ENCODE measurements at regions of chr9 and their contacts with region 1.

Region 1: GRCh38 chr9:91150998-91151717 is 210.6 kb downstream of the AUH start:
- DNase-seq: peak; percentile 64
- H3K4me3 Mint-ChIP-seq: peak overlapping the region; percentile 52
- H3K27ac Mint-ChIP-seq: peak overlapping the region; percentile 96
- H3K4me1 Mint-ChIP-seq: peaks cover 90% of the 10 kb centered on the region
- H3K27me3 Mint-ChIP-seq: no peaks in the 10 kb centered on the region

Region 2: GRCh38 chr9:90964101-90965020 is 186.8 kb before region 1 on chr9:
- intact Hi-C with region 1: loop called (anchors 2 kb)
- DNase-seq: peak; percentile 17
- H3K4me3 Mint-ChIP-seq: peak overlapping the region; percentile 69
- H3K27ac Mint-ChIP-seq: peak overlapping the region; percentile 81
- H3K4me1 Mint-ChIP-seq: peaks cover 65% of the 10 kb centered on the region
- H3K27me3 Mint-ChIP-seq: no peaks in the 10 kb centered on the region

Region 3: GRCh38 chr9:90974643-90975245 is 176.4 kb before region 1 on chr9:
- intact Hi-C with region 1: no loop called
- DNase-seq: no peak
- H3K4me3 Mint-ChIP-seq: no peak overlapping the region
- H3K27ac Mint-ChIP-seq: no peak overlapping the region
- H3K4me1 Mint-ChIP-seq: peaks cover 31% of the 10 kb centered on the region
- H3K27me3 Mint-ChIP-seq: no peaks in the 10 kb centered on the region

Region 4: GRCh38 chr9:91047993-91048607 is 103.1 kb before region 1 on chr9:
- intact Hi-C with region 1: loop called (anchors 1 kb)
- DNase-seq: peak; percentile 56
- H3K4me3 Mint-ChIP-seq: peak overlapping the region; percentile 28
- H3K27ac Mint-ChIP-seq: peak overlapping the region; percentile 90
- H3K4me1 Mint-ChIP-seq: peaks cover 73% of the 10 kb centered on the region
- H3K27me3 Mint-ChIP-seq: no peaks in the 10 kb centered on the region

Region 5: DNA sequence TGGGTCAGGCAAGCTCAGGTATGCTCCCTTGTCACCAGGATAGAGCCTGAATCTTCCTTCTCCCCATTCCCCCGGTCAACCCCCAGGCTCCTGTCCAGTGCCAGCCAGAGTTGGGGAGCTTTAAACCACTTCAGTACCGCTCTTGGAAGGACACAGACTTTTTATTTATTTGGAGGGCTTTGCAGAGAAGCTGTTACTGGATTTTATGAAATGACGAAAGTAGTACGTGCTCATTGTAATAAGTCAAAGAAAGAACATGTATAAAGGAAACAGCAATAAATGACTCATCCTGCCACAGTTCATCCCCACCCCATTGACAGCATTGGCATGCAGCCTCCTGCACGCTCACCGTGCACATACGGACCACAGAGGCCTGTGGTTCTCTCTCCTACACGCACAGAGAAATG is 19.7 kb before region 1 on chr9:
- intact Hi-C with region 1: loop called (anchors 1 kb)
- DNase-seq: peak; percentile 81
- H3K4me3 Mint-ChIP-seq: peak overlapping the region; percentile 49
- H3K27ac Mint-ChIP-seq: peak overlapping the region; percentile 98
- H3K4me1 Mint-ChIP-seq: peaks cover 49% of the 10 kb centered on the region
- H3K27me3 Mint-ChIP-seq: no peaks in the 10 kb centered on the region

Region 6: GRCh38 chr9:91177661-91178280 is 26.6 kb after region 1 on chr9:
- intact Hi-C with region 1: loop called (anchors 1 kb)
- DNase-seq: peak; percentile 30
- H3K4me3 Mint-ChIP-seq: peak overlapping the region; percentile 41
- H3K27ac Mint-ChIP-seq: peak overlapping the region; percentile 99
- H3K4me1 Mint-ChIP-seq: peaks cover 55% of the 10 kb centered on the region
- H3K27me3 Mint-ChIP-seq: no peaks in the 10 kb centered on the region

Region 7: GRCh38 chr9:91207729-91208418 is 56.7 kb after region 1 on chr9:
- intact Hi-C with region 1: no loop called
- DNase-seq: no peak
- H3K4me3 Mint-ChIP-seq: peak overlapping the region; percentile 49
- H3K27ac Mint-ChIP-seq: peak overlapping the region; percentile 93
- H3K4me1 Mint-ChIP-seq: peaks cover 67% of the 10 kb centered on the region
- H3K27me3 Mint-ChIP-seq: no peaks in the 10 kb centered on the region

Region 8: GRCh38 chr9:91423785-91424402 is 272.7 kb after region 1 on chr9 and contains the start of gene NFIL3:
- intact Hi-C with region 1: loop called (anchors 1 kb)
- DNase-seq: peak; percentile 71
- H3K4me3 Mint-ChIP-seq: peak within 1 kb of the TSS; percentile 100
- H3K27ac Mint-ChIP-seq: peak within 1 kb of the TSS; percentile 99
- H3K4me1 Mint-ChIP-seq: peaks cover 51% of the 10 kb centered on the region
- H3K27me3 Mint-ChIP-seq: no peaks in the 10 kb centered on the region
- total RNA-seq, gene NFIL3: 191 and 192 TPM in 2 replicates

Measured in activated T-helper 2 cell treated with anti-CD3 and anti-CD28 coated beads, Interferon-gamma antibody, Interleukin-2, Interleukin-4, amounts not matched to agents 10 μg/mL and 5 μg/mL and 100 μg/mL, durations not matched to agents 14 hours and 24 hours and 36 hours (primary cell).